CD8-positive, alpha-beta T cell (primary cell): ENCODE measurements at regions of chr5 and their contacts with region 1.

Region 1: DNA sequence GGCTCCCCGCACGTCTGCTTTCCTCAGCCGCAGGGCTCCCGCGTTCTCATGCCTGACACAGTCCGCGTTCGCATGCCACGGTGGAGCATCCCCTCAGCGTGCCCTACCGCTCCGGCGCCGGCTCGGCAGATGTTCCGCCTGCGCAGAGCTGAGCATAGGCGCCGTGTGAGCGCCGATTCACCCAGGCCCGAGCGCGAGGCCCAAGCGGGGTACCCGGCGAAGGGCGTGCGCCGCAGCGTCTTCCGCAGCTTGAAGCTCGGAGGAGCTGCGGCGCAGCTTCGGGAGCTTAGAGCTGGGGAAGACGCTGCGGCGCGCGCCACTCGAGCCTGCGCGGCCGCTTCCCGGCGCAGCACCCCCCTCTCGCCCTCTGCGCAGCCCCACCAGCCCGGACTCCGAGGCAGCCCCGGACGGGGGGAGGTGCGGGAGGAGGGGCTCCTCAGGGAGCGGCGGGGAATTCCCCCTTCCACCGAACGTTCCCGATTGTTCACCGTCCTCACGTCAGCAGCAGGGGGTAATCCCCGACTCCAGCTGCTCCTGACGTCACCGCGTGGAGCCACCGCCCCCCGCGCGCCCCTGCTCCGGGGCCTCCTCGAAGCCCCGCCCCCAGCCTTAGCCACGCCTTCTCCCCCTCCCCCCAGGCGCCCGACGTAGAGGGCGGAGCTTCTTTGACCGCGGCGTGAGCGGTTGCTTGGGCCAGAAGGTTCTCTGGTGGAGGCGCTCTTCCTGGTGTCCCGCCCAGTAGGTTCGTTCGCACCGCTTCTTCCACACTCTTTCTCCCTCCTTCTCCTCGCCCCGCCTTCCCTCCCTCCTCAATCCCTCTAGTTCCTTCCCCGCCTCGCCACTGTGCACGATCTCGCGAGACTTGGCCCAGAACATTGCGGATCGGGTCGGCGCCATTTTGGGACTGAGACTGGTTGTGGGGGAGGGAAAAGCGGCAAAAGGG is at the start of gene GPBP1:
- DNase-seq: peak; percentile 95 to 100 (median 98)
- ATAC-seq: peak; percentile 74
- H3K4me3 ChIP-seq: peak within 1 kb of the TSS; percentile 87 to 100
- H3K4me3 Mint-ChIP-seq: peak within 1 kb of the TSS; percentile 96
- H3K27ac ChIP-seq: peak within 1 kb of the TSS; percentile 91 to 98
- H3K27ac Mint-ChIP-seq: peak within 1 kb of the TSS; percentile 98
- H3K4me1 ChIP-seq: peaks cover 18% of the 10 kb centered on the region
- H3K4me1 Mint-ChIP-seq: peaks cover 38% of the 10 kb centered on the region
- H3K27me3 ChIP-seq: no peaks in the 10 kb centered on the region
- H3K27me3 Mint-ChIP-seq: no peaks in the 10 kb centered on the region
- CTCF ChIP-seq: no peak
- total RNA-seq, gene GPBP1: 164 to 165 TPM

Region 2: DNA sequence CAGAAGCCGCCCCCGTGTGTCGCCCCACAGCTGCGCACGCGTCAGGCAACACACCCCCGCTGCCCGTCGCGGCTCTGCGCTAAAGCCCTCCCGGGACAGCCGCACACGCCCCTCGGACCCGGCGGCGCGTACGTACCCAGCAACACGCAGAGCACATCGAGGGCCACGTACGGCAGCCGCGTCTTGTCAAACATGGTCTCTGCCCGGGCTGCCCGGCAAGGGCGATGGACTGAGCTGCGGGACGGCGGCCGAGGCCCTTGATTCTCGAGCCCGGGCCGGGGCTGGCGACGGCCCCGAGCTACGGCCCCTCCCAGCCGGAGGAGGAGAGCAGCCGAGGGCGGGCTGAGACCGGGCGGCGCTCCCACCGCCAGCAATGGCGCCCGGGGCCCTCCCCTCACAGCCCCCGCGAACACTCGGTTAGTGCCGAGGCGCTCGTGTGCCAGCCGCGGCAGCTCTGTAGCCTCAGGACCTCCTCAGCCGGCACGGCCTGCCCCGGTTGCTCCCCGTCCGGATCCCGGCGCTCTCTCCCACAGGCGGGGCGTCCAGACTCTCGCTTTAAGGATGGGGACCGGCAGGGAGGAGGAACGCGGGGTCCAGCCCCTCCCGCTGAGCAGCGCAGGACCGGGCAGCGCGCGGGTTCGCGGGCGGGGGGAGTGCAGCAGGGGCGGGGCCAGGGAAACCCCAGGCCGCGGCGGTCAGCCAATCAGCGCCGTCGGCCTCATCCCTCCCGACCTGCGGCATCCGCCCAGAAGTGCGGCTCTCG is 1638.8 kb before region 1 on chr5 and contains the start of gene PLPP1:
- CTCF ChIA-PET with region 1: no interaction called
- POLR2A ChIA-PET with region 1: no interaction called
- intact Hi-C with region 1: loop called (anchors 10 kb)
- DNase-seq: peak; percentile 57 to 93 (median 79)
- ATAC-seq: peak; percentile 79
- H3K4me3 ChIP-seq: peak within 1 kb of the TSS; percentile 81 to 97
- H3K4me3 Mint-ChIP-seq: peak within 1 kb of the TSS; percentile 93
- H3K27ac ChIP-seq: peak within 1 kb of the TSS; percentile 81 to 87
- H3K27ac Mint-ChIP-seq: peak within 1 kb of the TSS; percentile 92
- H3K4me1 ChIP-seq: peaks cover 25% of the 10 kb centered on the region
- H3K4me1 Mint-ChIP-seq: peaks cover 37% of the 10 kb centered on the region
- H3K27me3 ChIP-seq: no peaks in the 10 kb centered on the region
- H3K27me3 Mint-ChIP-seq: no peaks in the 10 kb centered on the region
- CTCF ChIP-seq: no peak
- total RNA-seq, gene PLPP1: 5.8 to 5.9 TPM

Region 3: DNA sequence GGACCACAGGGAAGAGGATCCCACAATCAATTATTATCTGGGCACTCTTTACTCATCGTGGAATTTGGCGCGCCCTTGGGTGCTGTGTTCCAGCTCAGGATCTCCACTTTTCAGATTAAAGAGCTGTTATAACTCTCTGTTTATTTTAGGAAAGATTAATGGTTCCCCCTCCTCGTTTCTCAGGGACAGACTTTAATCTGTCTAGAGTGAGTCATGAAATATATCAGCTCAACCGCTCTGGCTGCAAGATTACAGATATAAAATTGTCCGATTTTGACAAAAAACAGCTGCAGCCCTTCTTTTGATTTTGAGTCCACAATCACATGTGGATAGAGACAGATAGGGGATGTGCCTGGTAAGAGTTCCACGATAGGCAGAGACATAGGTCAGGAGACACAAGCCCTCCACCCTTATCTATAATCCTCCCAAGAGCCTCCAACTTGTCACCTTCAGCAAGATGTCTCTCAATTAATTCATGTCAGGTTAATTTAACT is 862.7 kb before region 1 on chr5:
- CTCF ChIA-PET with region 1: no interaction called
- POLR2A ChIA-PET with region 1: no interaction called
- intact Hi-C with region 1: no loop called
- DNase-seq: no peak
- ATAC-seq: no peak
- H3K4me3 ChIP-seq: no peak overlapping the region
- H3K4me3 Mint-ChIP-seq: no peak overlapping the region
- H3K27ac ChIP-seq: no peak overlapping the region
- H3K27ac Mint-ChIP-seq: no peak overlapping the region
- H3K4me1 ChIP-seq: no peaks in the 10 kb centered on the region
- H3K4me1 Mint-ChIP-seq: no peaks in the 10 kb centered on the region
- H3K27me3 ChIP-seq: no peaks in the 10 kb centered on the region
- H3K27me3 Mint-ChIP-seq: peaks cover 2% of the 10 kb centered on the region
- CTCF ChIP-seq: no peak

Region 4: DNA sequence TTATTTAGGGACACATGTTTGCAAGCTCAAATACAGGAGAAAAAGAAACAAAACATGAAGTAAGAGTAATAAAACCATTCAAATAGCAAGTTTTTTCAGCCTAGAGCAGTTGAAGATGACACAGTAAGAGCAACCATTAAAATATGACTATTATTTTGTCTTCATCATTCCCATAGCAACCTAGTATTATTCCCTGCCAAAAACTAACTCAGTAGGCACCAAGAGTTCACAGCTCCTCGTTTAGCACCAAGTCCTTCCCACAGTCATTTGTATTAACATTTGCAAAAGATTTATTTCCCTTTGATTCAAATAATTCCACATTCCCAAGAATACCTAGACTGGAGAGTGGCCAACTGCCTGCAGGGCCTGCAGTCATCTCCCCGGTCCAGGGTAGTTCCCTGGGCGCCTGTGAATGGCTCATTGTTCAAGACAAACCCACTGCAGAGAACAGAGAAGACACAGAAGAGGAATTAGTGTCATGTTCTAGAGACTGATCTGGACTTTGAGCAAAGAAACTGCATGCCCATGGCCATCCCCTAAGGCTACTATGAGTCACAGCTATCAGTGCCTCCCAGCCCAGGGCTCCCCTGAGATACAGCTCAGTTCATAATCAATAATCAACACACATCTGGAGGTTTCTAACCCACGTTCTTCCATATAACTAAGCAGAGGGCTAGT is 497.2 kb before region 1 on chr5:
- CTCF ChIA-PET with region 1: no interaction called
- POLR2A ChIA-PET with region 1: no interaction called
- intact Hi-C with region 1: no loop called
- DNase-seq: no peak
- ATAC-seq: no peak
- H3K4me3 ChIP-seq: no peak overlapping the region
- H3K4me3 Mint-ChIP-seq: no peak overlapping the region
- H3K27ac ChIP-seq: no peak overlapping the region
- H3K27ac Mint-ChIP-seq: no peak overlapping the region
- H3K4me1 ChIP-seq: no peaks in the 10 kb centered on the region
- H3K4me1 Mint-ChIP-seq: peaks cover 11% of the 10 kb centered on the region
- H3K27me3 ChIP-seq: peaks cover 0 to 3% of the 10 kb centered on the region in 2 experiments
- H3K27me3 Mint-ChIP-seq: no peaks in the 10 kb centered on the region
- CTCF ChIP-seq: no peak

Region 5: GRCh38 chr5:56951946-56952691 is 221.3 kb before region 1 on chr5 and contains the start of gene MIER3:
- CTCF ChIA-PET with region 1: interaction called, 4 read pairs
- POLR2A ChIA-PET with region 1: interaction called, 8 read pairs
- intact Hi-C with region 1: loop called (anchors 1 to 2 kb)
- DNase-seq: peak; percentile 50 to 86 (median 78)
- ATAC-seq: peak; percentile 92
- H3K4me3 ChIP-seq: peak within 1 kb of the TSS; percentile 66 to 69
- H3K4me3 Mint-ChIP-seq: peak within 1 kb of the TSS; percentile 95
- H3K27ac ChIP-seq: peak within 1 kb of the TSS; percentile 37 to 40
- H3K27ac Mint-ChIP-seq: peak within 1 kb of the TSS; percentile 87
- H3K4me1 ChIP-seq: peaks cover 16% of the 10 kb centered on the region
- H3K4me1 Mint-ChIP-seq: peaks cover 23% of the 10 kb centered on the region
- H3K27me3 ChIP-seq: no peaks in the 10 kb centered on the region
- H3K27me3 Mint-ChIP-seq: peaks cover 14% of the 10 kb centered on the region
- CTCF ChIP-seq: no peak
- total RNA-seq, gene MIER3: 29.3 to 39.2 TPM

Region 6: GRCh38 chr5:57137401-57137800 is 36.1 kb before region 1 on chr5:
- CTCF ChIA-PET with region 1: no interaction called
- POLR2A ChIA-PET with region 1: interaction called, 5 read pairs
- intact Hi-C with region 1: loop called in 1 of 2 experiments (anchors 5 kb)
- DNase-seq: peak in 1 of 9 experiments; percentile 2
- ATAC-seq: no peak
- H3K4me3 ChIP-seq: no peak overlapping the region
- H3K4me3 Mint-ChIP-seq: no peak overlapping the region
- H3K27ac ChIP-seq: no peak overlapping the region
- H3K27ac Mint-ChIP-seq: no peak overlapping the region
- H3K4me1 ChIP-seq: no peaks in the 10 kb centered on the region
- H3K4me1 Mint-ChIP-seq: no peaks in the 10 kb centered on the region
- H3K27me3 ChIP-seq: no peaks in the 10 kb centered on the region
- H3K27me3 Mint-ChIP-seq: no peaks in the 10 kb centered on the region
- CTCF ChIP-seq: no peak

Region 7: GRCh38 chr5:57221049-57221568 is 47.7 kb after region 1 on chr5:
- CTCF ChIA-PET with region 1: interaction called, 8 read pairs
- POLR2A ChIA-PET with region 1: no interaction called
- intact Hi-C with region 1: loop called (anchors 1 to 2 kb)
- DNase-seq: peak in 3 of 9 experiments; percentile 51 to 83 (median 78)
- ATAC-seq: peak; percentile 83
- H3K4me3 ChIP-seq: no peak overlapping the region
- H3K4me3 Mint-ChIP-seq: no peak overlapping the region
- H3K27ac ChIP-seq: no peak overlapping the region
- H3K27ac Mint-ChIP-seq: peak overlapping the region; percentile 64
- H3K4me1 ChIP-seq: peaks cover 14% of the 10 kb centered on the region
- H3K4me1 Mint-ChIP-seq: peaks cover 53% of the 10 kb centered on the region
- H3K27me3 ChIP-seq: no peaks in the 10 kb centered on the region
- H3K27me3 Mint-ChIP-seq: no peaks in the 10 kb centered on the region
- CTCF ChIP-seq: peak; percentile 99

Region 8: DNA sequence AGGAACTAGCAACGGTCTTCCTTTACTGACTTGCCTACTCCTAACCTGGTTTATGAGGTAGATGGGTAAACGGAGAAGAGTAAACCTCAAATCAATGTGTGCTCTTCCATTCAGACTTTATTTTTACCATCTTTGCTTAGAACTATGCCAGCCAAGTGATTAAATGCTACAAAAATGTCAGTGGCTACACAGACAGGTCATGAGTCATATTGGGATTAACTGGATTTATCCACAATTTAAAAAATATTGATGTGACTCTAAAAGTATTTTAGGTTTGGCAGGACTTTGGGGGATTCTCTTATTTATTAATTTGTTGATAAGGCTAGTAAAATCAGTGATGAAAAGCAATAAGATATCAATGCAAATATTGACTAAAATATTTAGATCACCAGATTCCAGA is 1011.5 kb after region 1 on chr5:
- CTCF ChIA-PET with region 1: no interaction called
- POLR2A ChIA-PET with region 1: no interaction called
- intact Hi-C with region 1: no loop called
- DNase-seq: no peak
- ATAC-seq: no peak
- H3K4me3 ChIP-seq: no peak overlapping the region
- H3K4me3 Mint-ChIP-seq: no peak overlapping the region
- H3K27ac ChIP-seq: no peak overlapping the region
- H3K27ac Mint-ChIP-seq: no peak overlapping the region
- H3K4me1 ChIP-seq: no peaks in the 10 kb centered on the region
- H3K4me1 Mint-ChIP-seq: no peaks in the 10 kb centered on the region
- H3K27me3 ChIP-seq: no peaks in the 10 kb centered on the region
- H3K27me3 Mint-ChIP-seq: no peaks in the 10 kb centered on the region
- CTCF ChIP-seq: no peak

Region 9: GRCh38 chr5:58460732-58461286 is 1287.4 kb after region 1 on chr5:
- CTCF ChIA-PET with region 1: no interaction called
- POLR2A ChIA-PET with region 1: no interaction called
- intact Hi-C with region 1: loop called in 1 of 2 experiments (anchors 1 kb)
- DNase-seq: peak; percentile 79 to 94 (median 89)
- ATAC-seq: peak; percentile 67
- H3K4me3 ChIP-seq: peak overlapping the region; percentile 66 to 81
- H3K4me3 Mint-ChIP-seq: peak overlapping the region; percentile 90
- H3K27ac ChIP-seq: peak overlapping the region; percentile 79 to 87
- H3K27ac Mint-ChIP-seq: peak overlapping the region; percentile 83
- H3K4me1 ChIP-seq: peaks cover 7% of the 10 kb centered on the region
- H3K4me1 Mint-ChIP-seq: peaks cover 13% of the 10 kb centered on the region
- H3K27me3 ChIP-seq: peaks cover 4 to 8% of the 10 kb centered on the region in 2 experiments
- H3K27me3 Mint-ChIP-seq: peaks cover 11% of the 10 kb centered on the region
- CTCF ChIP-seq: peak; percentile 79